ENCODE measurements at regions of chr6 and their contacts with region 1.

Region 1: GRCh38 chr6:161370880-161371279 is 97.0 kb upstream of the AGPAT4 start:
- DNase-seq: peak; percentile 35 to 82 (median 67)
- ATAC-seq: peak; percentile 93
- H3K4me3 ChIP-seq: no peak overlapping the region
- H3K4me3 Mint-ChIP-seq: no peak overlapping the region
- H3K27ac ChIP-seq: no peak overlapping the region
- H3K27ac Mint-ChIP-seq: no peak overlapping the region
- H3K4me1 ChIP-seq: no peaks in the 10 kb centered on the region
- H3K4me1 Mint-ChIP-seq: peaks cover 2% of the 10 kb centered on the region
- H3K27me3 ChIP-seq: no peaks in the 10 kb centered on the region
- H3K27me3 Mint-ChIP-seq: no peaks in the 10 kb centered on the region
- CTCF ChIP-seq: peak; percentile 89

Region 2: DNA sequence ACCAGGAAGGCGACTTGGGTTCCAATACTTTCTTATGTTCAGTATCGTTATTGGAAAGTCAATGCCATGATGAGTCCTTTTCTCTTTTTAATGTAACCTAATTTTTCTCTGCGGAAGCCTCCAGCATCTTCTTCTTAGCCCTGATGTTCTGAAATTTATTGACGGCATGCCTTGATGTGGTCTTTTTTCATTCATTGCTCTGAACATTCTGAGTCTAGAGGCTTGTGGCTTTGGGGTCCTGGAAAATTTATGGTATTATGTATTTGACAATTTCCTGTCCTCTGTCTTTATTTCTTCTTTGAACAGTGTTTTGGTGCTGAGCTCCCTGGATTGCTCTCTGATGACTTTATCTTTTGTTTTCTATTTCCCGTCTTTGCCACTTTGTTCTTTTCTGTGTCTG is 1508.8 kb before region 1 on chr6:
- CTCF ChIA-PET with region 1: no interaction called
- POLR2A ChIA-PET with region 1: no interaction called
- intact Hi-C with region 1: loop called in 1 of 2 experiments (anchors 5 kb)
- DNase-seq: peak in 2 of 9 experiments; percentile 42 to 70
- ATAC-seq: peak; percentile 69
- H3K4me3 ChIP-seq: no peak overlapping the region
- H3K4me3 Mint-ChIP-seq: peak overlapping the region; percentile 10
- H3K27ac ChIP-seq: no peak overlapping the region
- H3K27ac Mint-ChIP-seq: peak overlapping the region; percentile 64
- H3K4me1 ChIP-seq: peaks cover 27% of the 10 kb centered on the region
- H3K4me1 Mint-ChIP-seq: peaks cover 22% of the 10 kb centered on the region
- H3K27me3 ChIP-seq: no peaks in the 10 kb centered on the region
- H3K27me3 Mint-ChIP-seq: peaks cover 3% of the 10 kb centered on the region
- CTCF ChIP-seq: no peak

Region 3: DNA sequence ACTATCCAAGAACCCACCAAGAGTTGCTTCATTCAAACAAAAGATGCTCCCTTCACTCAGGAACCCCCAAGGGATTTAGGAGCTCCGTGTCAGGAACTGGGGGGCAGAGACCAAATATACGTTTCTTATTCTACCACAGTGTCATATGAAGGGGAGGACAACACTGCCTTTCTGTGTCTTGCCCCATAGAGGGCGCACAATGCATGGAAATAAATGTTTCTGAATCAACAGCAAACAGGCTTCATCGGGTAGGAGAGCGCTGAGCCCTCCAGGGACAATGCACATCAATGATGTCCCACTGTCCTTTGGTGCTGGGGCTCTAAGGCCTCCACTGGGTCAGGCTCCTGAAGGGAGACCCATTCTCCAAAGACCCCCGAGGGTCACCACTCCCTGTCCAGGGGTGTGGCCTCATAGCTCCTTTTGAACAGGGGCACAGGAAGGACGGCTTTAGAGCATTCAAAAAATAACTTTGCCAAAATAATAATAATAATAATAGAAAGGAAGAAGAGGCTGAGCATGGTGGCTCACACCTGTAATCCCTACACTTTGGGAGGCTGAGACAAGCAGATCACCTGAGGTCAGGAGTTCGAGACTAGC is 637.7 kb before region 1 on chr6:
- CTCF ChIA-PET with region 1: interaction called, 16 read pairs
- POLR2A ChIA-PET with region 1: no interaction called
- intact Hi-C with region 1: loop called (anchors 1 to 2 kb)
- DNase-seq: peak in 3 of 9 experiments; percentile 15 to 49 (median 29)
- ATAC-seq: no peak
- H3K4me3 ChIP-seq: no peak overlapping the region
- H3K4me3 Mint-ChIP-seq: no peak overlapping the region
- H3K27ac ChIP-seq: no peak overlapping the region
- H3K27ac Mint-ChIP-seq: no peak overlapping the region
- H3K4me1 ChIP-seq: no peaks in the 10 kb centered on the region
- H3K4me1 Mint-ChIP-seq: no peaks in the 10 kb centered on the region
- H3K27me3 ChIP-seq: no peaks in the 10 kb centered on the region
- H3K27me3 Mint-ChIP-seq: peaks cover 3% of the 10 kb centered on the region
- CTCF ChIP-seq: peak; percentile 25

Region 4: DNA sequence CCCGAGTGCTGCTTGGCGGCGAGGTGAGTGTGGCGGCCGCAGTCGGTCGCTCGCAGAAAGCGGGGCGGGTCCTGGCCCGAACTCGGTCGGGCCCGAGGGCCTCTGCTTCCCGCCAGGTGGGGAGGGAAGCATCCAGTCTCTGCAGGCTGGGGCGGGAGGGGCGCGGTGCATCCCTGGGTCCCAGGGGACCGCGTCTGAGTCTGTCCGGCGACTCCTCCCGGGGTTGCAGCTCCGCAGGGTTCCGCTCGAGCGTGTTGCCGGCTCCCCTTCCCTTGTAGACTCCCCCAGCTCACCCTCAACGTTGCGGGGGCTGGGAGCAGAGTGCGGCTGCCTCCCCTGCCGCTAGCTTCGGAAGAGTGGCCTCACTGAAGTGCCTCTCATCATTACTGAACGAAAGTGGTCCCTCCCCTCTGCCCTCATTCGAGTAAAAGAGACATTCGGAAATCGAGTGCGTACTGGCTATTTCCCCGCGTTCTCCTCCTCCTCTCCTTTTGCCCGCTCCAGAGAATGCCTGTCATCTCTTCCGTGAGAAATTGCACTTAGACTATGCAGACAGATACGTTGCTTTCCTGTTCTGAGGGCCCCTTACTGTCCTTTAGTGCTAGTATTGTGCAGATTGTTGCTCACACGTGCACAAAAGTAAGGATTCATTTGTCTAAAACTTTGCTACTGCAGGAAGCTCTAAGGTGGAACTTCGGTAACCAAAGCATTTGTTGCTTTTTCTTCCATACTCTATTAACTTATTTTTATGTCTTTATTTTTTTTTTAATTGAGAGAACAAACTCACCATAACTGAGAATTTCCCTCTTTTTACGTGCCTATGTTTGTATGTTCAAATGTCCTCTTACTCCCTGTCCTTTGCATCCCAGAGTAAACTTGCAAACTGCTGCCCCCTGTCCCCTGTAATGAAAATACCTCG is 378.6 kb before region 1 on chr6:
- CTCF ChIA-PET with region 1: interaction called, 4 read pairs
- POLR2A ChIA-PET with region 1: no interaction called
- intact Hi-C with region 1: loop called in 1 of 2 experiments (anchors 10 kb)
- DNase-seq: peak in 8 of 9 experiments; percentile 11 to 75 (median 38)
- ATAC-seq: peak; percentile 64
- H3K4me3 ChIP-seq: peak overlapping the region; percentile 85 to 94
- H3K4me3 Mint-ChIP-seq: peak overlapping the region; percentile 96
- H3K27ac ChIP-seq: peak overlapping the region; percentile 78 to 82
- H3K27ac Mint-ChIP-seq: peak overlapping the region; percentile 90
- H3K4me1 ChIP-seq: peaks cover 32% of the 10 kb centered on the region
- H3K4me1 Mint-ChIP-seq: peaks cover 47% of the 10 kb centered on the region
- H3K27me3 ChIP-seq: no peaks in the 10 kb centered on the region
- H3K27me3 Mint-ChIP-seq: no peaks in the 10 kb centered on the region
- CTCF ChIP-seq: peak; percentile 49

Region 5: GRCh38 chr6:161152907-161153662 is 217.8 kb before region 1 on chr6:
- CTCF ChIA-PET with region 1: interaction called, 8 read pairs
- POLR2A ChIA-PET with region 1: no interaction called
- intact Hi-C with region 1: loop called (anchors 1 kb)
- DNase-seq: peak in 3 of 9 experiments; percentile 14 to 43 (median 38)
- ATAC-seq: no peak
- H3K4me3 ChIP-seq: no peak overlapping the region
- H3K4me3 Mint-ChIP-seq: no peak overlapping the region
- H3K27ac ChIP-seq: no peak overlapping the region
- H3K27ac Mint-ChIP-seq: no peak overlapping the region
- H3K4me1 ChIP-seq: no peaks in the 10 kb centered on the region
- H3K4me1 Mint-ChIP-seq: no peaks in the 10 kb centered on the region
- H3K27me3 ChIP-seq: no peaks in the 10 kb centered on the region
- H3K27me3 Mint-ChIP-seq: no peaks in the 10 kb centered on the region
- CTCF ChIP-seq: no peak

Region 6: DNA sequence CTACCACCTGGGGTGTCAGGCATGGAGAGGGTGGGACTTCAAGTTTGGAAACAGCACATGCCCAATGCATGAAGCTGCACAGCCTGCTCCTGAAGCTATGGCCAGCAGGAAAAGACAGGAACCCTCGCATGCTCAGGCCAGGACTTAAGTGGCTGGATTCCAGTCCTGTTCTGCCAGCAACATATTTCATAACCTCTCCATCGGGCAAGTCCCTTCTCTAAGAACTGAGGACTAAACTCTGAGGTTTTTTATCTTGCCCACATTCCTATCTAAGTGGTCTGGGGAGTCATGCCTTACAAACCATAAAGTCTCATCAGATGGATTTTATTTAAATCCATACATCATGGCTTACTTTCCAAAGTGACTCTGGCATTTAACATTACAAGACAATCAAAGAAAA is 69.5 kb before region 1 on chr6:
- CTCF ChIA-PET with region 1: no interaction called
- POLR2A ChIA-PET with region 1: no interaction called
- intact Hi-C with region 1: no loop called
- DNase-seq: no peak
- ATAC-seq: no peak
- H3K4me3 ChIP-seq: no peak overlapping the region
- H3K4me3 Mint-ChIP-seq: no peak overlapping the region
- H3K27ac ChIP-seq: no peak overlapping the region
- H3K27ac Mint-ChIP-seq: no peak overlapping the region
- H3K4me1 ChIP-seq: no peaks in the 10 kb centered on the region
- H3K4me1 Mint-ChIP-seq: no peaks in the 10 kb centered on the region
- H3K27me3 ChIP-seq: no peaks in the 10 kb centered on the region
- H3K27me3 Mint-ChIP-seq: peaks cover 2% of the 10 kb centered on the region
- CTCF ChIP-seq: no peak

Measured in CD8-positive, alpha-beta T cell (primary cell).